Left lung (tissue), 14 donors: ENCODE measurements at regions of chr10 and their contacts with region 1.

Region 1: GRCh38 chr10:49512121-49512809 is 26.7 kb downstream of the ERCC6 start:
- DNase-seq: peak in 1 of 4 donors; percentile 21
- ATAC-seq: peak; percentile 85
- H3K4me3 ChIP-seq: no peak overlapping the region
- H3K27ac ChIP-seq: no peak overlapping the region
- H3K4me1 ChIP-seq: no peaks in the 10 kb centered on the region
- H3K27me3 ChIP-seq: no peaks in the 10 kb centered on the region
- CTCF ChIP-seq: peak; percentile 34 to 55

Region 2: DNA sequence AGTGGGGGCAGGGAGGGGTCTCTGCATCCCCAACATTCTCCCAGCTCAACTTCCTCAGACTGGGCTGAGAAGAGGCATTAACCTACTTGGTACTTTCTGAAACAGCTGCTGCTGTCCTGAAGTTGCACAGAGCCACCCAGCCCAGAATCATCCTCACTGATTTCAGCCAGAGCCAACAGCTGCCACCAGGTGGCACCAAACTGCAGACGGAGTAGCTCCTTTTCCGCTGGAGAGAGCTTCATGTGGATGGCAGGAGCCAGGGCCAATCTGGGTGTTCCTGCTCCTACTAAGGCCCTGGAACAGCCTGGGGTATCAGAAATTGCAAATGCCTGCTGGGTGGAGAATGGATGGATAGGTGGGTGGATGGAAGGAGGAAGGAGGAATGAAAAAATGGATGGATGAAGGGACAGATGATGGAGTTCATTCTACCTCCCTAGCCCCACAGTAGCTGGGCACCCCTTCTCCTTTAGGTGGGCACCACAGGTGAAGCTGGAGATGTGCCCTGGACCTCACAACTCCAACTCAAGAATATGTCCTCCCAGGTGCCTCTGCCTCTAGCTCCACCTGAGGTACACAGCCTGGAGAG is 104.6 kb before region 1 on chr10:
- intact Hi-C with region 1: loop called in 1 of 2 experiments (anchors 5 kb)
- DNase-seq: peak; percentile 52 to 88 (median 77)
- ATAC-seq: peak; percentile 92
- H3K4me3 ChIP-seq: no peak overlapping the region
- H3K27ac ChIP-seq: no peak overlapping the region
- H3K4me1 ChIP-seq: no peaks in the 10 kb centered on the region
- H3K27me3 ChIP-seq: peaks cover 0 to 61% of the 10 kb centered on the region in 2 donors
- CTCF ChIP-seq: peak; percentile 86 to 89

Region 3: GRCh38 chr10:49649294-49649693 is 137.0 kb after region 1 on chr10:
- intact Hi-C with region 1: no loop called
- DNase-seq: no peak
- ATAC-seq: no peak
- H3K4me3 ChIP-seq: no peak overlapping the region
- H3K27ac ChIP-seq: no peak overlapping the region
- H3K4me1 ChIP-seq: no peaks in the 10 kb centered on the region
- H3K27me3 ChIP-seq: peaks cover 0 to 29% of the 10 kb centered on the region in 2 donors
- CTCF ChIP-seq: no peak